ENCODE measurements at regions of chr5 and their contacts with region 1.

Region 1: GRCh38 chr5:143134900-143135299 is 268.6 kb downstream of the NR3C1 start:
- DNase-seq: no peak
- ATAC-seq: peak; percentile 3 to 49 (median 42)
- H3K4me3 ChIP-seq: peak overlapping the region; percentile 54
- H3K27ac ChIP-seq: peak overlapping the region; percentile 94
- H3K4me1 ChIP-seq: peaks cover 71% of the 10 kb centered on the region
- H3K27me3 ChIP-seq: no peaks in the 10 kb centered on the region
- CTCF ChIP-seq: no peak

Region 2: DNA sequence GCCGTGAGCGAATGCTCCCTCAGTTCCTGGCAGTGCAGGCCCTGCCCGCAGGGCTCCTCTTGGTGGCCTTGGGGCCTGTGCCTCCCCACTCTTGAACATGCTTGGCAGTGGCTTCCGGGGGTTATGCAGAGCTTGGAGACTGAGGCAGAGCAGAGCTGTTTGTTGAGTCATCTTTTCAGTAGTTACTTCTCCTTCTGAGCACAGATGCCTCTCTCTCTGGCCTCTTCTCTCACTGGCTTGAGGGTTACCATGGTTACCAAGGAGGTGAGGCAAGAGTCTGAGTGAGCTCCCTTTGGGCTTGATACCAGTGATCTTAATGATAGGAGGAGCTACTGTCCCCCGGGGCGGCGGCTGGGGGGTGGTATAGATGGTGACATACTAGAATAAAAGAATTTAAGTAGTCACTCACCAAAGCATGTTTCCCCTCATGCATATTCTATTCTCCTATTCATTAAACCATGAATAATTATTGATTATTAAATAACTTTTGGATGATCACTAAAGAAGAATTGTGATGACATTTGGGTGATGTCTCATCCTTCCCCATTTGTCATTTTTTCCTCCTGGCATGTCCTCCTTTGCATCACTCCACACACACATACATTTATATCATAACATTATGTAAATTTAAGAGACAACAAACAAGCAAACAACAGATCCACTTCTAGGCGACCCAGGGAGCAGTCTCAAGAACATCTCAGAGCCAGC is 253.7 kb before region 1 on chr5:
- intact Hi-C with region 1: no loop called
- DNase-seq: no peak
- ATAC-seq: peak in 1 of 4 donors; percentile 44
- H3K4me3 ChIP-seq: no peak overlapping the region
- H3K27ac ChIP-seq: no peak overlapping the region
- H3K4me1 ChIP-seq: peaks cover 8% of the 10 kb centered on the region
- H3K27me3 ChIP-seq: no peaks in the 10 kb centered on the region
- CTCF ChIP-seq: no peak

Region 3: GRCh38 chr5:143023411-143024096 is 111.3 kb before region 1 on chr5:
- intact Hi-C with region 1: loop called in 1 of 2 experiments (anchors 5 kb)
- DNase-seq: peak; percentile 67 to 92
- ATAC-seq: peak; percentile 94 to 98 (median 96)
- H3K4me3 ChIP-seq: peak overlapping the region; percentile 7
- H3K27ac ChIP-seq: peak overlapping the region; percentile 86
- H3K4me1 ChIP-seq: peaks cover 51% of the 10 kb centered on the region
- H3K27me3 ChIP-seq: no peaks in the 10 kb centered on the region
- CTCF ChIP-seq: no peak

Region 4: DNA sequence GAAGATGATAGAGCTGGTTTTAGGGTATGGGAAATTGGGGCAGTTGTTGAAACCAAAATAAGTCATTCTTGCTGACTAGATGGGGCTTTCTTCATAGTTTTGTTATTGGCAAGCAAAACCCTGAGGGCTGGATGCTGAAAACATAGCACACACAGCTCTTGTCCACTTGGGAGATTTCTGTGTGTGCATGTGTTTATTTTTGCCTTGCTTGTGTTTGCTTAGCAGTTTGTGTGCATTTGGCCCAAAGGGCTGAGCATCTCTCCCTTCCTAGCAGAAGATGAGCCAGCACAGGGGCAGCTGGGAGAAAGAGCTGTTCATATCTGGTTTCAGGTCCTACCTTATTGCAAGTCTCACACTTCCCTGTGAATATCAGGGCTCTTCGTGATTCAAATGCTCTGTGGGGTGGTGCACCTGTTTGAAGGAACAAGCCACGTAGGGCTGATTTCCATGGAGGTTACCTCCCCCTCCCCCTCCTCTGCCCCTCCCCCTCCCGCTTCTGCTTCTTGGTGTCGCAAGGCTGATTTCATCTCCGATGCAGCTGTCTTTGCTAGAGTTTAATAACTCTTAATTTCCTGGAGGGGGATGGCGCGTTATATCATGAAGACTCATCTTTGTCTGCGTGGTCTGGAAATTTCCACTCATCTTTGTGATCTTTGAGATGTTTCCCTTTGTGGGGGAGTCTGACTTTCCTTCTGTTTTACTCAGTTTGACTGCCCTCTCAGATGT is 68.2 kb before region 1 on chr5:
- intact Hi-C with region 1: loop called in 1 of 2 experiments (anchors 5 kb)
- DNase-seq: peak; percentile 49 to 72
- ATAC-seq: peak; percentile 67 to 79 (median 72)
- H3K4me3 ChIP-seq: peak overlapping the region; percentile 23
- H3K27ac ChIP-seq: peak overlapping the region; percentile 81
- H3K4me1 ChIP-seq: peaks cover 58% of the 10 kb centered on the region
- H3K27me3 ChIP-seq: no peaks in the 10 kb centered on the region
- CTCF ChIP-seq: no peak

Region 5: DNA sequence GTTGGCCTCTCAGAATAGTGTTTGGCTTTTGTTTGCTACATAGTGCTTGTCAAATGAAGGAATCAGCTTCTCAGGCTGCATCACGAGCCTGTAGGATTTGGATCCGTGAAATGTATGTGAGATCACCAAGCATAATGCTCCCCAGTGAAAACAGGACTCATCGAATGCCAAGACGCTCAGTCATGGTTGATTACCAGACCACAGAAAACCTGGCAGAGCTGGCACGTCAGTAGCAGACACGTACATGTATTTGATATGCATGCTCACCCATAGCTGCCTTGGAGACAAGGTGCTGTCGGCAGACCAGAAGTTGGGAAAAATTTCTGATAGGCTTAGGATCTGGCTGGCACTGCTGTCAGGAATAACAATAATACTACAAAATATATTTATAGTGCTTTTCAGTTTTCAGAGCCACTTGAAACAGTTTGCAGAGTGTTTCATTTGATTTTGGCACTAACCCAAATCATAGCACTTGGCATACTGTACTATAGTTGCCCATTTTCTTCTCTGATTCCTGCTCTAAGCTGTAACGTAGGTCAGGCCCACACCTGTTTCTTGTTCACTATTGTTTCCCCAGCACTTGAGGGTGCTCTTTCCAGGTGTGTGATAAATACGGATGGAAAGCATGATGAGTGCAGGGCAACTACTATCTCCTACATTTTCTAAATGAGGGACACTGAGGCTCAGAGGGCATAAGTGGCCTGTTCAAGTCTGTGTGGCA is 42.5 kb after region 1 on chr5:
- intact Hi-C with region 1: loop called (anchors 5 kb)
- DNase-seq: peak in 1 of 2 donors; percentile 77
- ATAC-seq: peak; percentile 85 to 88 (median 87)
- H3K4me3 ChIP-seq: no peak overlapping the region
- H3K27ac ChIP-seq: peak overlapping the region; percentile 85
- H3K4me1 ChIP-seq: peaks cover 33% of the 10 kb centered on the region
- H3K27me3 ChIP-seq: no peaks in the 10 kb centered on the region
- CTCF ChIP-seq: no peak